HepG2 (cell line): ENCODE measurements at regions of chr16 and their contacts with region 1.

Region 1: GRCh38 chr16:19907161-19907992 is 22.7 kb upstream of the GPRC5B start:
- DNase-seq: peak; percentile 67
- ATAC-seq: peak; percentile 97
- H3K4me3 ChIP-seq: no peak overlapping the region
- H3K27ac ChIP-seq: no peak overlapping the region
- H3K4me1 ChIP-seq: no peaks in the 10 kb centered on the region
- H3K27me3 ChIP-seq: peaks cover 3 to 30% of the 10 kb centered on the region in 2 experiments; a peak in 4 of 5 replicates
- CTCF ChIP-seq: peak; percentile 99
- EP300 ChIP-seq: no peak
- POLR2A ChIP-seq: no peak
- RAD21 ChIP-seq: peak; percentile 99

Region 2: DNA sequence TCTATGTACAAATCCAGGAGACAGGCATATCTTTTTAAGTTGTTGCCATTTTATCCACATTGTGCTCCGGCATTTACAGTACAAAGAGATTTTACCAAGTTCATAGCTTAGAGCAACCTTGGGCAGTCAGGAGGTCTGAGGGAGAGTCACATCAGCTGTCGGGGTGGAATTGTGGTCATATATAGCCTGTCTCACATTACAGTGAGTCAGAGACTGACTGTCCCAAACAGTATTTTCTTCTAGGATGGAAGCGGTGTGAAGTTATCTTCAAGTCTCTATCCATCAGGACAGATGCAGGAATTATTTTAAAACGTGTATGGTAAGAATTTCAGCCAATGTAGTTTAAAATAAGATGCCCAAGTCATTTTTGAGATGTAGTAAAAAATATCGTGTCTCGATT is 75.7 kb before region 1 on chr16:
- CTCF ChIA-PET with region 1: no interaction called
- POLR2A ChIA-PET with region 1: no interaction called
- in situ Hi-C with region 1: no loop called
- intact Hi-C with region 1: no loop called
- DNase-seq: no peak
- ATAC-seq: no peak
- H3K4me3 ChIP-seq: no peak overlapping the region
- H3K27ac ChIP-seq: no peak overlapping the region
- H3K4me1 ChIP-seq: no peaks in the 10 kb centered on the region
- H3K27me3 ChIP-seq: no peaks in the 10 kb centered on the region
- CTCF ChIP-seq: no peak
- EP300 ChIP-seq: no peak
- POLR2A ChIP-seq: no peak
- RAD21 ChIP-seq: no peak

Region 3: GRCh38 chr16:19890901-19891300 is 16.5 kb before region 1 on chr16:
- CTCF ChIA-PET with region 1: no interaction called
- POLR2A ChIA-PET with region 1: no interaction called
- in situ Hi-C with region 1: no loop called
- intact Hi-C with region 1: no loop called
- DNase-seq: no peak
- ATAC-seq: no peak
- H3K4me3 ChIP-seq: no peak overlapping the region
- H3K27ac ChIP-seq: no peak overlapping the region
- H3K4me1 ChIP-seq: peaks cover 7% of the 10 kb centered on the region
- H3K27me3 ChIP-seq: peaks cover 0 to 11% of the 10 kb centered on the region in 2 experiments; a peak in 3 of 5 replicates
- CTCF ChIP-seq: no peak
- EP300 ChIP-seq: no peak
- POLR2A ChIP-seq: no peak
- RAD21 ChIP-seq: no peak

Region 4: DNA sequence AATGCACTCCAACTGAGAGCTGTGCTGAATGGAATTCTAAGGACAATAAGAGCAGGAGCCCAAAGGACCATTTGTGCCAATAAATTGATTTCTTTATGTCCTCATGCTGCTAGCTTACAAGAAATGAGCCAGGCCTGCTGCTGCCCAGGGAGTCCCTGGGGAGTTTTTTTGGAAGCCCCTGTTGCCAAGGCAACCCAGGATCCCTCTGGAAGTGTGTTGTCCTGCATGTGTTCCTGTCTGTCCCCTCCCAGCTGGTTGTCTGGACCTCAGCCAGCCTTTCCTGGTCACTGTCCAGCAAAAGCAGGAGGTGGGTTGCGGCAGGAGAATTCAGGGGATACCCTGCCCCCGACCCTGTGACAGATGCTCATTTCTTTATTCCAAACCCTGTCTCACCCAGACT is 28.3 kb after region 1 on chr16:
- CTCF ChIA-PET with region 1: no interaction called
- POLR2A ChIA-PET with region 1: no interaction called
- in situ Hi-C with region 1: no loop called
- intact Hi-C with region 1: no loop called
- DNase-seq: no peak
- ATAC-seq: no peak
- H3K4me3 ChIP-seq: no peak overlapping the region
- H3K27ac ChIP-seq: no peak overlapping the region
- H3K4me1 ChIP-seq: no peaks in the 10 kb centered on the region
- H3K27me3 ChIP-seq: peaks cover 4 to 30% of the 10 kb centered on the region in 2 experiments; a peak in 2 of 5 replicates
- CTCF ChIP-seq: no peak
- EP300 ChIP-seq: no peak
- POLR2A ChIP-seq: no peak
- RAD21 ChIP-seq: no peak

Region 5: GRCh38 chr16:19980632-19981265 is 73.4 kb after region 1 on chr16:
- CTCF ChIA-PET with region 1: no interaction called
- POLR2A ChIA-PET with region 1: no interaction called
- in situ Hi-C with region 1: no loop called
- intact Hi-C with region 1: loop called (anchors 1 kb)
- DNase-seq: peak; percentile 34
- ATAC-seq: peak; percentile 76
- H3K4me3 ChIP-seq: no peak overlapping the region
- H3K27ac ChIP-seq: no peak overlapping the region
- H3K4me1 ChIP-seq: no peaks in the 10 kb centered on the region
- H3K27me3 ChIP-seq: peaks cover 0 to 11% of the 10 kb centered on the region in 2 experiments; a peak in 2 of 5 replicates
- CTCF ChIP-seq: peak; percentile 62
- EP300 ChIP-seq: no peak
- POLR2A ChIP-seq: no peak
- RAD21 ChIP-seq: peak; percentile 29; the same call in 1 of the 2 replicates

Region 6: GRCh38 chr16:20004932-20005331 is 97.6 kb after region 1 on chr16:
- CTCF ChIA-PET with region 1: no interaction called
- POLR2A ChIA-PET with region 1: no interaction called
- in situ Hi-C with region 1: no loop called
- intact Hi-C with region 1: loop called (anchors 10 kb)
- DNase-seq: peak; percentile 14
- ATAC-seq: peak; percentile 71
- H3K4me3 ChIP-seq: no peak overlapping the region
- H3K27ac ChIP-seq: no peak overlapping the region
- H3K4me1 ChIP-seq: peaks cover 16% of the 10 kb centered on the region
- H3K27me3 ChIP-seq: no peaks in the 10 kb centered on the region; a peak in 1 of 5 replicates
- CTCF ChIP-seq: peak; percentile 44
- EP300 ChIP-seq: no peak
- POLR2A ChIP-seq: no peak
- RAD21 ChIP-seq: no peak